IMR-90 (cell line): ENCODE measurements at regions of chr1 and their contacts with region 1.

Region 1: DNA sequence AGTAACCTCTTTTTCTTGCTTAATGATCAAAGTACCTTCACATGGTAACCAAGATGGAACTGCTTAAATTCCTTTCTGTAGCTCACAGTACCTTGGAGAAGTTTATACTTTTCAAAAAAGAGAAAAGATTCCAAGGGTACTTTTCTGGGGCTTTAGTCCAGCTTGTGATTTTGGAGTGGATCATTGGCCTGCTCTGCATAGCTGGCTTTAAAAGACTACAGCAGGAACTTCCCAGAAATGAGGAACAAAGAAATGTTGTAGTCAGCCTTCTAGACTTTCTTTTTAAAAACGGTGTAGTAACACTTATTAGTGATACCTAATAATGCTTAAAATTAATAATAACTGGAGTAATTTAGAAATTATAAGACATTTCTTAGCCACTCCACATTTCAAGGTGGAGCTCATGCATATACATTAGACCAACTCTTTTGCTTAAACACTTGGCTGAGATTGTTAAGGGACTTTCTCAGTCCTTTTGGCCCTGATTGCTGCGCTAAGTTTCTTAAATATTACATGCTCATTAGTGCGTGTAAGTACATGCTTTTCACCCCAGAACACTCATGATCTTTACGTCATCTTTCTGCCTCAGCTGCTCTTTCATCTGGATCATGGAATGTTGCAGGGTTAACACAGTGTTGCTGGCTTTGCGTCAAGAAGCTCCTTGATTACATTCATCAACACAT is 57.3 kb downstream of the SDCCAG8 start:
- DNase-seq: no peak
- ATAC-seq: no peak
- H3K4me3 ChIP-seq: no peak overlapping the region
- H3K27ac ChIP-seq: no peak overlapping the region
- H3K4me1 ChIP-seq: peaks cover 2% of the 10 kb centered on the region; the same call in 1 of the 2 replicates
- H3K27me3 ChIP-seq: no peaks in the 10 kb centered on the region
- CTCF ChIP-seq: no peak
- POLR2A ChIP-seq: no peak
- RAD21 ChIP-seq: no peak

Region 2: GRCh38 chr1:242467556-242468145 is 845.4 kb before region 1 on chr1:
- CTCF ChIA-PET with region 1: no interaction called
- POLR2A ChIA-PET with region 1: no interaction called
- dilution Hi-C with region 1: no loop called
- in situ Hi-C with region 1: loop called (anchors 25 kb)
- intact Hi-C with region 1: no loop called
- DNase-seq: peak; percentile 8
- ATAC-seq: peak; percentile 56
- H3K4me3 ChIP-seq: no peak overlapping the region
- H3K27ac ChIP-seq: no peak overlapping the region
- H3K4me1 ChIP-seq: no peaks in the 10 kb centered on the region
- H3K27me3 ChIP-seq: no peaks in the 10 kb centered on the region
- CTCF ChIP-seq: peak; percentile 34
- POLR2A ChIP-seq: no peak
- RAD21 ChIP-seq: no peak; the same call in 1 of the 2 replicates

Region 3: GRCh38 chr1:243254927-243255790 is 57.9 kb before region 1 on chr1 and contains the start of gene CEP170:
- CTCF ChIA-PET with region 1: no interaction called
- POLR2A ChIA-PET with region 1: no interaction called
- dilution Hi-C with region 1: no loop called
- in situ Hi-C with region 1: no loop called
- intact Hi-C with region 1: loop called (anchors 5 kb)
- DNase-seq: peak; percentile 97
- ATAC-seq: peak; percentile 75
- H3K4me3 ChIP-seq: peak within 1 kb of the TSS; percentile 86
- H3K27ac ChIP-seq: peak within 1 kb of the TSS; percentile 89
- H3K4me1 ChIP-seq: no peaks in the 10 kb centered on the region; the same call in 1 of the 2 replicates
- H3K27me3 ChIP-seq: no peaks in the 10 kb centered on the region
- CTCF ChIP-seq: no peak
- POLR2A ChIP-seq: no peak
- RAD21 ChIP-seq: no peak
- total RNA-seq, gene CEP170: 151 and 196 TPM in 2 replicates

Region 4: DNA sequence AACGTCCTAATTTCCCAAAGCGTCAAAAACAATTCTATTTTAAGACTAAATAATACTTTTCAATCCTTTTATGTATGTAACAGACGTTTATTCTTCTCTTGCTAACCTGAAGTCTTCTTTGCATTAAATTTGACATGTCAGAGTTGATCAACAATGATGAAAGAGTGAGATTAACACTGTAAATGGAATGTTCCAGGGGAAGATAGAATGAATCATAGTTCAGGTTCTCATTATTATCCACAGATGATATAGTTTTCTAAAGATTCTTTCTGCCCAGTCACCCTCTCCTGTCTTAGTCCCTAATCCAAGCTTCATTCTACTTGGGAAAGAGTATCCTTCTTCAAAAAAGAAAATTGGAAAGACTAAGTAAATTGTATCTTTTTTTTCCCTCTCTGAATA is 18.4 kb before region 1 on chr1:
- CTCF ChIA-PET with region 1: no interaction called
- POLR2A ChIA-PET with region 1: no interaction called
- dilution Hi-C with region 1: no loop called
- in situ Hi-C with region 1: no loop called
- intact Hi-C with region 1: loop called (anchors 2 kb)
- DNase-seq: peak; percentile 68
- ATAC-seq: peak; percentile 51; the same call in 1 of the 2 replicates
- H3K4me3 ChIP-seq: no peak overlapping the region
- H3K27ac ChIP-seq: no peak overlapping the region
- H3K4me1 ChIP-seq: peaks cover 5% of the 10 kb centered on the region; the same call in 1 of the 2 replicates
- H3K27me3 ChIP-seq: no peaks in the 10 kb centered on the region
- CTCF ChIP-seq: no peak
- POLR2A ChIP-seq: no peak
- RAD21 ChIP-seq: no peak